Activated CD4-positive, alpha-beta memory T cell treated with anti-CD3 and anti-CD28 coated beads for 36 hours (primary cell): ENCODE measurements at regions of chr12 and their contacts with region 1.

Region 1: DNA sequence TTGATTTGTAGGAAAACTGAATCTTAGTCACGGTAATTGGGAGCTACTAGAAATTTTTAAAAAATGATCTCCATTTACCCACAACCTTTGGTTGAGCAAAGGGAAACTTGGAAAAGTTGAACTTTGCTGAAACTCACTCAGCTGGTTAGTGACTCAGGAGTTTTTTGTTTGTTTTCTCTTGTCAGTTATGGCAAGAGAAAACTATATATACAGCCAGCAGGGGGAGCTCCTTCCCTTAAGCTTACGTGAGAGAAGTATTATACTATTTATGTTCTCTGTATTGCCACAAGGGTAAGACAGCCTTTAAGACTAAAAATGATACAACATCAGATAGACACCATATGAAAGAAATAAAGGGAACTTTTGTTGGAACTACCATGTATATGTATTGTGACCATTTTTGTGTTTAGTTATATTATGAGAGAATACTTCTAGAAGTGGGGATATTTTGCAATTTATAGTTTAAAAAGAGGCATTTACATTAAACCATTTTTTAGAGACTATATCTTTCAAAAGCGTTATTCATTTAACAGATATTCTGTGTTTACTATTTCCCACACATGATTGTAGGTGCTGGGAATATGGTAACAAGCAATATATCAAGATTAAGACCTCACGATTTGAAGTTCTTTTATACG is 28.1 kb upstream of the TBC1D30 start:
- DNase-seq: peak; percentile 53
- H3K4me3 Mint-ChIP-seq: no peak overlapping the region
- H3K27ac Mint-ChIP-seq: no peak overlapping the region
- H3K4me1 Mint-ChIP-seq: no peaks in the 10 kb centered on the region
- H3K27me3 Mint-ChIP-seq: peaks cover 13% of the 10 kb centered on the region

Region 2: DNA sequence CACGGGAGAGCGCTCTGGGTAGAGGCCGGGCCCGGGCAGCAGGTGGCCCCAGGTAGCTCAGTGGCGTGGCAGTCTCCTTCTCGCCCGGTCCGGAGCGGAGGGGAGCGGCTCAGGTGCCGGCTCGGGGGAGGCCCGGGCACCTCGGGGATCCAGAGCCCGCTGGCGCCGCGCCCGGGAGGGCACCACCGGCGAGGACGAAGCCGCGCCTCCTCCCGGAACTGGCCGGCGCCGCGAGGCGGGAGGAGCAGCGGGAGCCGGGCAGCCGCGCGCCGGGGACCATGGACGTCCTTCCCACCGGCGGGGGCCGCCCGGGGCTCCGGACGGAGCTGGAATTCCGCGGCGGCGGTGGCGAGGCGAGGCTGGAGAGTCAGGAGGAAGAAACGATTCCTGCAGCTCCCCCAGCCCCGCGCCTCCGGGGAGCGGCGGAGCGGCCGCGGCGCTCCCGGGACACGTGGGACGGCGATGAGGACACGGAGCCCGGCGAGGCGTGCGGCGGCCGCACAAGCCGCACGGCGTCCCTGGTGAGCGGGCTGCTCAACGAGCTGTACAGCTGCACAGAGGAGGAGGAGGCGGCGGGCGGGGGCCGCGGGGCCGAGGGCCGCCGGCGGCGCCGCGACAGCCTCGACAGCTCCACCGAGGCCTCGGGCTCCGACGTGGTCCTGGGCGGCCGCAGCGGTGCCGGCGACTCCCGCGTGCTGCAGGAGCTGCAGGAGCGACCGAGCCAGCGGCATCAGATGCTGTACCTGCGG is 15.6 kb before region 1 on chr12:
- CTCF ChIA-PET with region 1: interaction called, 30 read pairs
- POLR2A ChIA-PET with region 1: no interaction called
- intact Hi-C with region 1: no loop called
- DNase-seq: peak; percentile 21
- H3K4me3 Mint-ChIP-seq: peak overlapping the region; percentile 36
- H3K27ac Mint-ChIP-seq: no peak overlapping the region
- H3K4me1 Mint-ChIP-seq: peaks cover 16% of the 10 kb centered on the region
- H3K27me3 Mint-ChIP-seq: peaks cover 64% of the 10 kb centered on the region

Region 3: GRCh38 chr12:64810831-64811230 is 14.5 kb after region 1 on chr12:
- CTCF ChIA-PET with region 1: interaction called, 20 read pairs
- POLR2A ChIA-PET with region 1: no interaction called
- intact Hi-C with region 1: no loop called
- DNase-seq: no peak
- H3K4me3 Mint-ChIP-seq: no peak overlapping the region
- H3K27ac Mint-ChIP-seq: no peak overlapping the region
- H3K4me1 Mint-ChIP-seq: no peaks in the 10 kb centered on the region
- H3K27me3 Mint-ChIP-seq: peaks cover 36% of the 10 kb centered on the region

Region 4: GRCh38 chr12:64826234-64826633 is 29.9 kb after region 1 on chr12:
- CTCF ChIA-PET with region 1: interaction called, 12 read pairs
- POLR2A ChIA-PET with region 1: no interaction called
- intact Hi-C with region 1: loop called (anchors 2 kb)
- DNase-seq: peak; percentile 73
- H3K4me3 Mint-ChIP-seq: peak overlapping the region; percentile 24
- H3K27ac Mint-ChIP-seq: no peak overlapping the region
- H3K4me1 Mint-ChIP-seq: peaks cover 18% of the 10 kb centered on the region
- H3K27me3 Mint-ChIP-seq: peaks cover 59% of the 10 kb centered on the region

Region 5: DNA sequence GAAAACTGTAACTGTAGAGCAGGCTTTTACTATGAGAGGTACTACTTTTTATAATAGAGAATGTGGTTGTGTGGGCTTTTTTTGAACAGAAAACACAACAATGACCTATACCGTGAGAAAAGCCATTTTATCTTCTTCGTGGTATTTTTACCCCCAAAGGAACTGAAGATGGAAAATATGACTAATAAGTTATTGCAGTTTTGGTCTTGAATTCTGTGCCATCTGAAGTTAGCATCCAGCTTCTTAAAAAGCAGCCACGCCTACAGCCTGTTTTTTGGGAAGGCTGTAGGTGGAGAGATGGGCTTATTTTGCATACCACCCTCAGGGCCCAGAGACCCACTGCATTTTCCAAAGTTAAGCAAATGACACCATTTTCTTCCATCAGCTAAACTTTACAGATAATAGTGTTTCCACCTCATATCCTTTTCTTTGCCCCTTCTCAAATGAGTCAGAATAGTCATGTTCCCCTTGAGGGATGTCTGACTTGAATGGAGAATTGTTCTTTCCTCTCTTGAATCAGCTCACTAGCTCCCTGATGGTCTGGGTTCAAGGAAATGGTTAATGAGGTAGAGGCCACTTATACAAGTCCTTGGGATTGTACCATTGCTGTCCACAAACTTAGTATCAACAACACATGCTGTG is 81.2 kb after region 1 on chr12:
- CTCF ChIA-PET with region 1: interaction called, 15 read pairs
- POLR2A ChIA-PET with region 1: no interaction called
- intact Hi-C with region 1: no loop called
- DNase-seq: no peak
- H3K4me3 Mint-ChIP-seq: no peak overlapping the region
- H3K27ac Mint-ChIP-seq: no peak overlapping the region
- H3K4me1 Mint-ChIP-seq: peaks cover 12% of the 10 kb centered on the region
- H3K27me3 Mint-ChIP-seq: peaks cover 7% of the 10 kb centered on the region

Region 6: DNA sequence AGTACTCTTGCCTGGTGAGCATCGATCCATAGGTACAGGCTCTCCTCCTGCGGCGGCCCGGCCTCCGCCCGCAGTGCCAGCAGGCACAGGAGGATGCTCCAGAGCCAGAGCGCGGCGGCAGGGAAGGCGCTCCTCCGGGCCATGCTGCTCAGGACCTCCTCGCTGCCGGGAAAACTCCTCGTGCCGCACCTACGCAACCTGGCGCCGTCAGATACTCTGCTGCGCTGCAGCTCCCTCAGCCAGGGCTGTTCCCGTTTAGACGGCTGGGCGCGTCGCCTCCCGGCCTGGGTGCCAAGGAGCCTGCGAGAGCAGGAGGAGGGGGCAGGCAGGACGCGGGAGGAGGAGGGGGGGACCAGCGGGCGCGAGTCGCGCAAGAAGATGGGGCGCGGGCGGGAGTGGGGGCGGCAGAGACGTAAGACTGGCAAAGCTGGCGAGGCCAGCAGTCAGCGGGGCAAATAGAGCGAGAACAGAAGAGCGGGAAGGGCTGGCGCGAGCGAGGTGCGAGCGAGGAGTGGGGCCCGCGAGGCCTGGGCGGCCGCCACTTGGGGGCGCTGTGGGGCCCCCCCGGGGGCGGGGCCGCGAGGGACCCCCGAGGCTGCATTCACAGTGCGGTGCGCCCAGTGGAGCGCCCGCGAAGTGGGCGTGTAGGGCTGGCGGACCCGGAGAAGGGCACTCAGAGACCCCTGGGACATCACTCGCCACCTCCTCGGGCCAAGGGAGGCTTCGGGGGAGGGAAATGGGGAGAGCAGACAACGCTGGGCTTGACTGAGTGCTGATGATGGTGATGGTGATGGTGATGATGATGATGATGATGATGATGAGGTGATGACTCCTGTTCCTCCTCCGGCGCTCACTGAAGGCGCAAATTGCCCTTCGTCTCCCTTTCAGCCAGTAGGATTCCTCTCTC is 325.0 kb after region 1 on chr12 and contains the start of gene WIF1:
- CTCF ChIA-PET with region 1: interaction called, 9 read pairs
- POLR2A ChIA-PET with region 1: no interaction called
- intact Hi-C with region 1: loop called (anchors 1 kb)
- DNase-seq: peak; percentile 29
- H3K4me3 Mint-ChIP-seq: no peak within 1 kb of the TSS
- H3K27ac Mint-ChIP-seq: no peak within 1 kb of the TSS
- H3K4me1 Mint-ChIP-seq: peaks cover 6% of the 10 kb centered on the region
- H3K27me3 Mint-ChIP-seq: peaks cover 35% of the 10 kb centered on the region
- total RNA-seq, gene WIF1: 0.12 TPM in 1 of 2 experiments, not detected in the other